ENCODE measurements at regions of chr5 and their contacts with region 1.

Region 1: DNA sequence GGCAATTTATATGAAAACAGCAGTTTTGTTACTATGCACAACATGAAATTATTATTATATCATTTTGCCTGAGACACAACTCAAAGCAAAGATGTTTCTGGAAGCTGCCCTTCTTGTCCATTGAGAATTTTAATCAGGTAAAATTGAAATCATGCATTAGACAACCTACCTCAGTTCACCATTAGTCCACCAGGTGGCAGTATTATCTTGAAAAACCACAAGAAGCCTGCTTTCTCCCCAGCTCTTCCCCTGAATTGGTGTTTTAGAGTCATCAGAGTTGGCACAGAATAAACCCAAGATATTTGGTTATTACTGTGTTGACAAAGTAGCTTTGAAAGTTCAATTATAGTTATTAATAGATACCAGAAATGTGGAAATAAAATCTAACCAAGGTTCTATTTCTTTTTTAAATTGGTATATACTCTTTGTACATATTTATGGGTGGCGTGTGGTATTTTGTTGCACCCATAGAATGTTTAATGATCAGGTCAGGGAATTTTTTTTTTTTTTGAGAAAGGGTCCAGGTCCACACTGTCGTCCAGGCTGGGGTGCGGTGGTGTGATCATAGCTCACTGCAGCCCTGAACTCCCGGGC is 25.7 kb downstream of the UTP15 start:
- DNase-seq: peak; percentile 26
- H3K4me3 ChIP-seq: no peak overlapping the region
- H3K27me3 ChIP-seq: no peaks in the 10 kb centered on the region
- CTCF ChIP-seq: peak; percentile 60

Region 2: GRCh38 chr5:73693481-73694061 is 102.4 kb after region 1 on chr5:
- CTCF ChIA-PET with region 1: interaction called, 40 read pairs
- POLR2A ChIA-PET with region 1: no interaction called
- DNase-seq: no peak
- H3K4me3 ChIP-seq: no peak overlapping the region
- H3K27me3 ChIP-seq: no peaks in the 10 kb centered on the region
- CTCF ChIP-seq: peak; percentile 59

Region 3: DNA sequence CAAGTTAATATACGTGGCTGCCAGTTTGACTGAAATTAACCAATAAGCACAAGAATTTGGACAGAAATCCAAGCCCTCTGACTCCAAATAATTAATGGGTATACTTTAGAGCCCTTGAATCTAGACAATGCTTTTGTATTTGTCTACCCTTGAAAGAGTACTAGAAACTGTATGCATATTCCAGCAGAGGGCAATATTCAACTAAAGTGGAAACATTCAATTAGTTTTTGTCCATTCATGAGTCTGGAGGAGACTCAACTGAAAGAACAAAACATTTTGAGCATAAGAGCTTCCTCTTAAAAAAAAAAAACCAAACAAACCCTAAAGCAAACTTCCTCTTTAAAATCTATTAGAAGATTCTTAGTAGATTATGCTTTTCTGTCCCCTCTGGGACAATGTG is 192.6 kb after region 1 on chr5:
- CTCF ChIA-PET with region 1: interaction called, 41 read pairs
- POLR2A ChIA-PET with region 1: interaction called, 4 read pairs
- DNase-seq: no peak
- H3K4me3 ChIP-seq: no peak overlapping the region
- H3K27me3 ChIP-seq: no peaks in the 10 kb centered on the region
- CTCF ChIP-seq: peak; percentile 52

Region 4: DNA sequence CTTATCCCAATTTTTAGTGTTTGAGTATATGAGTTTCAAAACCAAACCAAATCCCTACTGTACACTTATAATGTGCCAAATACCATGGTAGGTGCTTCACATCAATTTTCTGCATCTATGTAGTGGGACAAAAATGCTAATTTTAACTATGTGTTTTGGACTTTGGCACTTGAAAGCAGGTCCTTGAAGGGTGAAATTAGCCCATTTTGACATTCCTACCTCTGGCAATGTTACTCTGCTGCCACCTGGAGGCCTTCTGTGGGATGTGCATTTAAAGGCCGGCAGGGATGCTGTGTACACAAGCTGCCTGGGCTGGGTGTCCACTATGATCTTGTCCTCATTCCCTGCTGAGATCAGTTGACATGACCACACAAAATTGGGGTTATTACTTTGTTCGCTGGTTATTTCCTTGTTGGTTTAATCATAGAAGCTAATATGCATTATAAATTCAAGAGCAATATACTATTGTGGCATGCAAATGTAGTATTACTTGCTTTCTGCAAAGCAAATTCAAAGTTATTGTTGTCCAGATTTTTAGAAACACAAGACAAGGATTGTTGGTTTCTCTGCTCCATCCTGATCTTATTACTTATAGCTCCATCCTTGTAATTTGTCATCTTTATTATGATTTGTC is 201.6 kb after region 1 on chr5:
- CTCF ChIA-PET with region 1: interaction called, 183 read pairs
- POLR2A ChIA-PET with region 1: no interaction called
- DNase-seq: peak; percentile 18
- H3K4me3 ChIP-seq: no peak overlapping the region
- H3K27me3 ChIP-seq: no peaks in the 10 kb centered on the region
- CTCF ChIP-seq: peak; percentile 97

Region 5: GRCh38 chr5:74648835-74649293 is 1057.7 kb after region 1 on chr5:
- CTCF ChIA-PET with region 1: interaction called, 14 read pairs
- POLR2A ChIA-PET with region 1: no interaction called
- DNase-seq: no peak
- H3K4me3 ChIP-seq: no peak overlapping the region
- H3K27me3 ChIP-seq: no peaks in the 10 kb centered on the region
- CTCF ChIP-seq: peak; percentile 65